OCI-LY7 (cell line): ENCODE measurements at regions of chr12 and their contacts with region 1.

Region 1: DNA sequence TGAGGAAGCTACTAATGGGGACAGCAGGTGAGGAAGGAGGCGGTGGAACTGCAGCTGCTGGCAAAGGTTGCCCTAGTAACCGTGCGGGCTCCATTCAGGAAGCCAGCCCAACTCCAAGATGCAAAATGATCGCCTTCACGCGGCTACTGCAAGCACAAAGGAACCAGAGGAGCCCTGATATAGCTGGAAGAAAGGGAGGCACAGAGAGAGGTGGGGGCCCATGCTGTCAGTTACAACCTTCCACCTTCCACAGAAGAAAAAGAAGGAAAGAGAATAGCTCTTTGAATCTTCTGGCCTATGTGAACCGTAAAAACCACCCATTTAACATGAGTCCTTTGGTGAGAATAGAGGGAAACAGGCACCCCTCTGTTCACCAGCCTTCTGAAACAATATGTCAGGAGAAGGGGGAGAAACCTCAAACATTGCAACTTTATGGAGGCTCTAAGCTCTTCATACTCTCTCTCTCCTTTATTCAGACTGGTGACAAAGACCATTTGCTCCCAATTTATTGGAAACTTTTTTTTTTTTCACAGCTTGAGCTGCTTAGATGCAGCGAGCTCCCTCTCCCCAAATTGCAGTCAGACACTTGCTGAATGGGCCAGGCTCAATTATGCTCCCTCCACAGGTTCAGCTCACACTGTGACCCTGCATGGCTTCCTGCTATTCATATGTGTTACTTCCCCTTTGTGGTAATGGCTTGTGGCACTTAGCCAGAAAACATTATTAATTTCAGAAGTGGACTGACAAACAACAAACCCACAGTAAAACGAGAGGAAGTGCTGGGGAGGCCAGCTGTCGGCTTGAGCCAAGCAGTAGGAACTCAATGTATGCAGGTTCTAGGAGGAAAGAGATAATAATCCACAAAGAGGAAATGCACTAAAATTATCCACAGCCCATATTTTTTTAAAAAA is 6.2 kb downstream of the DUSP6 start:
- DNase-seq: peak; percentile 94
- H3K4me3 ChIP-seq: peak overlapping the region; percentile 52
- H3K27ac ChIP-seq: peak overlapping the region; percentile 77
- H3K4me1 ChIP-seq: peaks cover 57% of the 10 kb centered on the region
- CTCF ChIP-seq: no peak

Region 2: DNA sequence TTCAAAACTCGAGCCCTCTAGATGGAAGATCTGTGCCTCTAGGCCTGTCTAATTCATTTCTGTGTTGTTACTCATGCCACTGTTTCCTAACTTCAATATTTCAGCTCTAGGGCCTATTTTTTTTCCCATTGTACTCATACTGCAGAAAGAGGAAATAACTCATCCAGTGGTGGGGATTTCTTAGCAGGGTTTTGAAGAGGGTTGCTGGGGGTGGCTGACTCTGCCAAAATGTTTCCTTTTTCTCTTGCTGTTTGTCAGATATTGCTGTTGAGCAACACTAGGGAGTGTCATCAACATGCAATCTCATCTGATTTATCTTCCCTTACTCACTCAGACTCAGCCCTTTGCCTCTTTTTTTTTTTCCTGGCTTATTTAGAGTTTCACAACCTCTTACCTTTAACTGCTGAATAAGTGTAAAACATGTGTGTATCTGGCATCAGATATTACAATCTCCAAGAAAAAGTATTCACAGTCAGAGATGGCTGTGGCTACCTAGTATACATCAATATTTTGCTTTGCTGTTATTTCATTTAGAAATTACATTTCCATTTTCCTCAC is 183.3 kb before region 1 on chr12:
- CTCF ChIA-PET with region 1: no interaction called
- POLR2A ChIA-PET with region 1: no interaction called
- intact Hi-C with region 1: no loop called
- DNase-seq: no peak
- H3K4me3 ChIP-seq: no peak overlapping the region
- H3K27ac ChIP-seq: no peak overlapping the region
- H3K4me1 ChIP-seq: no peaks in the 10 kb centered on the region
- CTCF ChIP-seq: no peak

Region 3: DNA sequence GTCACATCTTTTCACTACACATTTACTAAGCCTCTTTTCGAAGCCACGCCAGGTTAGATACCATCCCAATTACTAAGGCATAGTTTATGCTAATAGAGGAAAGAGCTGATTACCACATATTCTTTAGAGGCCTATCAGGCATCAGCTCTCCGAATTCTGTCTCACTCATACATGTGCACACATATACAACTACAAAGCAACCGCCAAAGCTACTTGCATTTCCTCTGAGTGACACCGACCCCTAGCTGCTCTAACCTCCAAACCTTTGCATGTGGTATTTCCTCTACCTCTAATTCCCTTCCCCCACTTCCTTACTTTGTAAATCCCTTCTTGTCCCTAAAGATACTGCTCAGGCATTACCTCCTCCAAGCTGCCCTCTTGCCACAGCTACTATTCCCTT is 101.0 kb before region 1 on chr12:
- CTCF ChIA-PET with region 1: no interaction called
- POLR2A ChIA-PET with region 1: no interaction called
- intact Hi-C with region 1: loop called (anchors 5 kb)
- DNase-seq: peak; percentile 40
- H3K4me3 ChIP-seq: no peak overlapping the region
- H3K27ac ChIP-seq: no peak overlapping the region
- H3K4me1 ChIP-seq: peaks cover 18% of the 10 kb centered on the region
- CTCF ChIP-seq: no peak

Region 4: GRCh38 chr12:89316705-89317139 is 29.4 kb before region 1 on chr12:
- CTCF ChIA-PET with region 1: interaction called, 8 read pairs
- POLR2A ChIA-PET with region 1: interaction called, 23 read pairs
- intact Hi-C with region 1: no loop called
- DNase-seq: no peak
- H3K4me3 ChIP-seq: no peak overlapping the region
- H3K27ac ChIP-seq: no peak overlapping the region
- H3K4me1 ChIP-seq: peaks cover 27% of the 10 kb centered on the region
- CTCF ChIP-seq: no peak

Region 5: GRCh38 chr12:89333564-89334252 is 12.4 kb before region 1 on chr12:
- CTCF ChIA-PET with region 1: no interaction called
- POLR2A ChIA-PET with region 1: interaction called, 10 read pairs
- intact Hi-C with region 1: no loop called
- DNase-seq: no peak
- H3K4me3 ChIP-seq: no peak overlapping the region
- H3K27ac ChIP-seq: no peak overlapping the region
- H3K4me1 ChIP-seq: no peaks in the 10 kb centered on the region
- CTCF ChIP-seq: no peak

Region 6: DNA sequence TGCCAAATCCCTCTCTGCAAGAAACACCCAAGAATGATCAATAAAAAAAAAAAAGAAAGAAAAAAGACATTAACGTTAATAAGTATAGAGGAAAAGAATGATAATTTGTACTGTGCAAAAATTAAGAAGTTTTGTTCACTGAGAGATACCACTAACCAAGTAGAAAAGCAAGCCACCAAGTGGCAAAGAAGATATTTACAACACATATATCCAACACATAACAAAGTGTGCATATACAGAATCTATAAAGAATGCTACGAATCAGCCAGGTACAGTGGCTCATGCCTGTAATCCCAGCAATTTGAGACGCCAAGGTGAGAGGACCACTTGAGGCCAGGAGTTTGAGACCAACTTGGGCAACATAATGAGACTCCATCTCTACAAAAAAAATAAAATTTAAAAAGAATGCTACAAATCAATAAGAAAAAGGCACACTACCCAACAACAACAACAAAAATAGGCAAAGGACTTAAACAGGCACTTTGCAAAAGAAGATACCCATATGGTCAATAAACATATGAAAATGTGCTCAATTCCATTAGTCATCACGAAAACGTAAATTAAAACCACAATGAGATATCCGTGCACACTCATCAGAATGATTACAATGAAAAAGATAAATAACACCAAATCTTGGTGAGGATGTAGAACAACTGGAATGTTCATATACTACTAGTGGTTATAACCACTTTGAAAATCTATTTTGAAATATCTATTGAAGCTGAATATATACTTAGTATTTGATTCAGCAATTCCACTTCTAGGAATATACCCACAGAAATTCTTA is 158.7 kb after region 1 on chr12:
- CTCF ChIA-PET with region 1: no interaction called
- POLR2A ChIA-PET with region 1: no interaction called
- intact Hi-C with region 1: no loop called
- DNase-seq: no peak
- H3K4me3 ChIP-seq: no peak overlapping the region
- H3K27ac ChIP-seq: no peak overlapping the region
- H3K4me1 ChIP-seq: no peaks in the 10 kb centered on the region
- CTCF ChIP-seq: 0 out of 2 replicates have a peak, but pooled peaks have one; percentile 22